ENCODE measurements at regions of chr11 and their contacts with region 1.

Region 1: GRCh38 chr11:6705905-6706535 is 22.9 kb upstream of the MRPL17 start:
- DNase-seq: peak; percentile 47
- CTCF ChIP-seq: peak; percentile 82

Region 2: GRCh38 chr11:6646918-6647679 is 58.9 kb before region 1 on chr11:
- CTCF ChIA-PET with region 1: no interaction called
- POLR2A ChIA-PET with region 1: no interaction called
- DNase-seq: peak; percentile 81
- CTCF ChIP-seq: no peak

Region 3: DNA sequence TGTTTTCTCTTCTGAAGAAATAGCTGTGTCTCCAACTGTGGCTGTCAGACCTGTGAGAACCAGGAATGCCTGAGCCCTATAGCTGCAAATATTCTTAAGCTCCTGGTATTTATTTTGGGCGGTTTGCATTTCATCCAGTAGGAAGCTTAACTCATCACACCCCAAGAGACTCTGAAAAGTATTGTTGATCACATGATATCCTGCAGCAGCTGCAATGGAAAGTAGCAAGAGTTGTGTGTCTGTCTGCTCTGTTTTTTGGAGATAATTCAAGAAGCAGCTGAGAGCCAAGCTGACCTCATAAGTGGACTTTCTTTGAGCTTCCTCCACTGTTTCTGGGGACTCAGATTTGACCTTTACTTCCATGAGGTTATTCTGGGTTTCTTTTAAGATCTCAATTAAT is 13.6 kb after region 1 on chr11:
- CTCF ChIA-PET with region 1: interaction called, 26 read pairs
- POLR2A ChIA-PET with region 1: no interaction called
- DNase-seq: no peak
- CTCF ChIP-seq: no peak

Region 4: GRCh38 chr11:6876914-6877313 is 170.9 kb after region 1 on chr11:
- CTCF ChIA-PET with region 1: no interaction called
- POLR2A ChIA-PET with region 1: no interaction called
- DNase-seq: no peak
- CTCF ChIP-seq: no peak